ENCODE measurements at regions of chr2 and their contacts with region 1.

Region 1: DNA sequence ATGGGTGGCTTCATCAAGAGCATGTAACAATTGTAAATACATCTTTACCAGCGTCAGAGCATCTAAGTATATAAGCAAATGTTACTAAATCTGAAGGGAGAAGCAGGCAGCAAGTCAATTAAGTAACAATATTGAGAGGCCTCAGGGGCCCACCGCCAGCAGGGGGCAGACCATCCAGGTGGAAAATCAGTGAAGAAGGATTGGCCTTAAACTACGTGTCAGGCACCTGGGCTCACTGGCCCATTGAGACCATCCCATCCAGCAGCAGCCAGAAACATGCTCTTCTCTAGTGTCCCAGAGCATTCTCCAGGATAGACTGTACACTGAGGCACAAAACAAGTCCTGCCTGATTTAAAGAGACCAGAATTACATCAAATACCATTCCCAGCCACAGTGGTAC is 96.2 kb upstream of the SNTG2 start:
- DNase-seq: peak in 1 of 3 donors; percentile 56
- ATAC-seq: peak; percentile 56 to 77 (median 62)
- H3K4me3 ChIP-seq: no peak overlapping the region
- H3K27ac ChIP-seq: no peak overlapping the region
- H3K4me1 ChIP-seq: no peaks in the 10 kb centered on the region
- H3K27me3 ChIP-seq: no peaks in the 10 kb centered on the region
- CTCF ChIP-seq: peak; percentile 35 to 73 (median 56)
- POLR2A ChIP-seq: no peak

Region 2: DNA sequence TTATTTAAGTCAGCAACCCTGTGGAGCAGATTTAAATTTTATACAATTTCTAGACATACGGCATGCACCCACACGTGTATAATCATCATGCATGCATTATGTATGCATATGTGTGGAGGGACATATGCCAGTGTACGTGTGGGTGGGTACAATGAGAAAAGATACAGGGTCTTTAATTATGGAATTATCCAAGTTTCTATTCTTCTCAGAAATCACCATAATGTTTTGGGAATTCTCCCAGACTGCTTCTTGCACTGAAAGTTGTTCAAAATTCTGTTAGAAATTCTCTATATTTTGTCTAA is 113.3 kb before region 1 on chr2:
- intact Hi-C with region 1: no loop called
- DNase-seq: no peak
- ATAC-seq: no peak
- H3K4me3 ChIP-seq: no peak overlapping the region
- H3K27ac ChIP-seq: no peak overlapping the region
- H3K4me1 ChIP-seq: no peaks in the 10 kb centered on the region
- H3K27me3 ChIP-seq: no peaks in the 10 kb centered on the region
- CTCF ChIP-seq: no peak
- POLR2A ChIP-seq: no peak

Region 3: DNA sequence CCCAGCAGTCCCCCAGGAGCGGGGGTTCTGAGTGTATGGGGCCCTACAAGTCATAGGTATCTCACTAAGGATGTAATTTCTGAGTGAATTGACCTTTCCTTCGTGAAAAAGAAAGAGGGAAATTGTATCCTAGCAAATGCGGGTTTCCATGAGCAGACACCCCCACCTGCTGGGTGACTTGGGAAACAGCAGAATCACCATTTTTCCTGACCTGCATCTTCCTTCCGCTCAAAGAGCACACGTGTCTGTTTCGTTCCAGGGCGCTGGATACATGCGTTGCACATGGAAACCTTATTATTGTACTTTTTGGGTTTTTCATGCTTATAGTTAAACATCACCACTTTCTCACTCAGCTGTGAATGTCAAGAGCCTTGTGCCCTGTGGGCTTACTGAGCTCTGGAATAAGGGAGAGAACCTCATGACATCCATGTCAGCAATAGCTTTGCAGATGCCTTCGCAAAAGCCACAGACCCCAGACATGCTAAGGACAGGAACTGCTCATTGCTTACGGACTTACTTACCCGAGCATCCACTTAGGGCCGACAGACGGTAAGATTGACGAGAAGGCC is 691.6 kb after region 1 on chr2:
- intact Hi-C with region 1: loop called in 1 of 2 experiments (anchors 5 kb)
- DNase-seq: no peak
- ATAC-seq: peak; percentile 44 to 55 (median 49)
- H3K4me3 ChIP-seq: no peak overlapping the region
- H3K27ac ChIP-seq: no peak overlapping the region
- H3K4me1 ChIP-seq: peaks cover 0 to 13% (median 0%) of the 10 kb centered on the region in 4 donors
- H3K27me3 ChIP-seq: no peaks in the 10 kb centered on the region
- CTCF ChIP-seq: peak; percentile 71 to 81 (median 75)
- POLR2A ChIP-seq: no peak

Measured in right lobe of liver (tissue), 6 donors.